Left cardiac atrium (tissue), 4 donors: ENCODE measurements at regions of chr16 and their contacts with region 1.

Region 1: GRCh38 chr16:27639561-27640276 is 89.8 kb downstream of the KATNIP start:
- DNase-seq: no peak
- ATAC-seq: peak; percentile 77 to 80

Region 2: GRCh38 chr16:27769561-27770255 is 130.0 kb after region 1 on chr16:
- intact Hi-C with region 1: loop called in 1 of 2 experiments (anchors 10 kb)
- DNase-seq: no peak
- ATAC-seq: no peak

Region 3: GRCh38 chr16:27859020-27859419 is 219.3 kb after region 1 on chr16:
- intact Hi-C with region 1: loop called (anchors 10 kb)
- DNase-seq: no peak
- ATAC-seq: no peak

Region 4: GRCh38 chr16:27867122-27868110 is 227.7 kb after region 1 on chr16:
- intact Hi-C with region 1: loop called in 1 of 2 experiments (anchors 10 kb)
- DNase-seq: peak; percentile 60
- ATAC-seq: peak; percentile 84 to 90

Region 5: DNA sequence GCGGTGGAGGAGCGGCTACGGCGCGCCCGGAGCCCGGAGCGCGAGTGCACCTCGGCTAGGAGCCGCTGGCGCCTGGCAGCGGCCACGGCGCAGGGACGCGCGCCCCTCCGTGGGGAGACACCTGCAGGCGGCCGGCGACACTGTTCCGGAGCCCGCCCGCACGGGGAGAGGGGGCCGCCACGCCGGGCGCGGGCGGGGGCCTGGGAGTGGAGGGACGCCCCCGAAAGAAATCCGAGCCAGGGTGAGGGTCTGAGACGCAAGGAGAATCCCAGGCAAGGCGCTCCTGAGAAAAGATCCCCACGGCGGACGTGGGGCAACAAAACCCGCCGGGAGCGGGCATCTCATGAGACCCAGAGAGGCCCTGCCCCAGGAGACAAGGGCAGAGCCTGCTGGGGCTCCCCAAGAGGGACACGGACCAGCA is 423.9 kb after region 1 on chr16 and contains the start of gene GSG1L:
- intact Hi-C with region 1: loop called (anchors 10 kb)
- DNase-seq: no peak
- ATAC-seq: peak; percentile 25 to 60
- total RNA-seq, gene GSG1L: 10.5 to 63.9 TPM